MCF 10A (cell line): ENCODE measurements at regions of chr6 and their contacts with region 1.

Region 1: DNA sequence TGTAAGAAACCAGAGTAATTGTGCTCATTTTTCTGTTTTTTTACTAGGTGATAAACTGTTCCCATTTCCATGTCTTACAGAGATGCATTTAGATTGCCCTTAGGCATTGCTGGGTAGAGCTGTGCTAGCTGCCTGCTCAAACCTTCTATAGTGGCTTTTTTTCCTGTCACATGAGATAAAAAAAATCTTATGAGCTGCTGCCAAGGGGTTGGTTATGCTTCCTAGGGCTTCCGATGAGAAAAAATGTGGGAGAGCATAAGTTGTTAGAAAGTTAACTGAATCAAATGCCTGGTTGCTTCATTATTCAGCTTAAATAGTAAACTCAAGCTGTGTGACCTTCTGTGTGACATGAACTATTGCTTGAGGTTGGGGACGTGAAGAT is 50.0 kb upstream of the NOX3 start:
- DNase-seq: no peak
- H3K4me3 Mint-ChIP-seq: no peak overlapping the region
- H3K27ac Mint-ChIP-seq: no peak overlapping the region
- H3K4me1 Mint-ChIP-seq: peaks cover 6% of the 10 kb centered on the region
- H3K27me3 Mint-ChIP-seq: no peaks in the 10 kb centered on the region
- CTCF ChIP-seq: no peak

Region 2: GRCh38 chr6:155493694-155494143 is 11.9 kb before region 1 on chr6:
- CTCF ChIA-PET with region 1: interaction called, 3 read pairs
- POLR2A ChIA-PET with region 1: interaction called, 12 read pairs
- intact Hi-C with region 1: no loop called
- DNase-seq: peak; percentile 95
- H3K4me3 Mint-ChIP-seq: no peak overlapping the region
- H3K27ac Mint-ChIP-seq: peak overlapping the region; percentile 64
- H3K4me1 Mint-ChIP-seq: peaks cover 22% of the 10 kb centered on the region
- H3K27me3 Mint-ChIP-seq: no peaks in the 10 kb centered on the region
- CTCF ChIP-seq: no peak

Region 3: GRCh38 chr6:155578251-155578650 is 72.7 kb after region 1 on chr6:
- CTCF ChIA-PET with region 1: no interaction called
- POLR2A ChIA-PET with region 1: no interaction called
- intact Hi-C with region 1: no loop called
- DNase-seq: no peak
- H3K4me3 Mint-ChIP-seq: no peak overlapping the region
- H3K27ac Mint-ChIP-seq: no peak overlapping the region
- H3K4me1 Mint-ChIP-seq: no peaks in the 10 kb centered on the region
- H3K27me3 Mint-ChIP-seq: peaks cover 22% of the 10 kb centered on the region
- CTCF ChIP-seq: no peak